ENCODE measurements at regions of chr19 and their contacts with region 1.

Region 1: DNA sequence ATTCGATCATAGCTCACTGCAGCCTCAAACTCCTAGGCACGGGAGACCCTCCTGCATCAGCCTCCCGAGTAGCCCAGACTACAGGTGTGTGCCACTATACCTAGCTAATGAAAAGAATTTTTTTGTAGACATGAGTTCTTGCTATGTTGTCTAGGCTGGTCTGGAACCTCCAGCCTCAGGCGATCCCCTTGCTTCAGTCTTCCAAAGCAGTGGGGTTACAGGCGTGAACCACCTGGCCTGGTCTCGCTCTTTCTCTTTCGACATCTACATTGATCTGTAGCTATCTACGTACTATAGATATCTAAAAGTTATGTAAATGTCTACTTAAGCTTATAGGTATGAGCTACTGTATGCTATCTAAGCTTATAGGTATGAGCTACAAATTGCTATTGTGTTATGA is 32.4 kb downstream of the NUMBL start:
- DNase-seq: no peak
- ATAC-seq: no peak
- H3K4me3 ChIP-seq: no peak overlapping the region
- H3K4me3 Mint-ChIP-seq: no peak overlapping the region
- H3K27ac ChIP-seq: no peak overlapping the region
- H3K27ac Mint-ChIP-seq: no peak overlapping the region
- H3K4me1 ChIP-seq: peaks cover 5 to 6% of the 10 kb centered on the region in 2 donors
- H3K4me1 Mint-ChIP-seq: peaks cover 10% of the 10 kb centered on the region
- H3K27me3 ChIP-seq: peaks cover 0 to 3% (median 0%) of the 10 kb centered on the region in 4 experiments
- H3K27me3 Mint-ChIP-seq: no peaks in the 10 kb centered on the region
- CTCF ChIP-seq: no peak

Region 2: GRCh38 chr19:40553885-40554857 is 103.9 kb before region 1 on chr19:
- CTCF ChIA-PET with region 1: no interaction called
- POLR2A ChIA-PET with region 1: no interaction called
- intact Hi-C with region 1: no loop called
- DNase-seq: no peak
- ATAC-seq: no peak
- H3K4me3 ChIP-seq: no peak overlapping the region
- H3K4me3 Mint-ChIP-seq: no peak overlapping the region
- H3K27ac ChIP-seq: no peak overlapping the region
- H3K27ac Mint-ChIP-seq: no peak overlapping the region
- H3K4me1 ChIP-seq: no peaks in the 10 kb centered on the region
- H3K4me1 Mint-ChIP-seq: peaks cover 4% of the 10 kb centered on the region
- H3K27me3 ChIP-seq: peaks cover 0 to 57% (median 17%) of the 10 kb centered on the region in 4 experiments
- H3K27me3 Mint-ChIP-seq: peaks cover 46% of the 10 kb centered on the region
- CTCF ChIP-seq: no peak

Region 3: GRCh38 chr19:40709817-40710216 is 51.8 kb after region 1 on chr19:
- CTCF ChIA-PET with region 1: no interaction called
- POLR2A ChIA-PET with region 1: no interaction called
- intact Hi-C with region 1: no loop called
- DNase-seq: no peak
- ATAC-seq: no peak
- H3K4me3 ChIP-seq: no peak overlapping the region
- H3K4me3 Mint-ChIP-seq: no peak overlapping the region
- H3K27ac ChIP-seq: no peak overlapping the region
- H3K27ac Mint-ChIP-seq: no peak overlapping the region
- H3K4me1 ChIP-seq: peaks cover 9 to 11% of the 10 kb centered on the region in 2 donors
- H3K4me1 Mint-ChIP-seq: peaks cover 11% of the 10 kb centered on the region
- H3K27me3 ChIP-seq: no peaks in the 10 kb centered on the region
- H3K27me3 Mint-ChIP-seq: no peaks in the 10 kb centered on the region
- CTCF ChIP-seq: no peak

Region 4: DNA sequence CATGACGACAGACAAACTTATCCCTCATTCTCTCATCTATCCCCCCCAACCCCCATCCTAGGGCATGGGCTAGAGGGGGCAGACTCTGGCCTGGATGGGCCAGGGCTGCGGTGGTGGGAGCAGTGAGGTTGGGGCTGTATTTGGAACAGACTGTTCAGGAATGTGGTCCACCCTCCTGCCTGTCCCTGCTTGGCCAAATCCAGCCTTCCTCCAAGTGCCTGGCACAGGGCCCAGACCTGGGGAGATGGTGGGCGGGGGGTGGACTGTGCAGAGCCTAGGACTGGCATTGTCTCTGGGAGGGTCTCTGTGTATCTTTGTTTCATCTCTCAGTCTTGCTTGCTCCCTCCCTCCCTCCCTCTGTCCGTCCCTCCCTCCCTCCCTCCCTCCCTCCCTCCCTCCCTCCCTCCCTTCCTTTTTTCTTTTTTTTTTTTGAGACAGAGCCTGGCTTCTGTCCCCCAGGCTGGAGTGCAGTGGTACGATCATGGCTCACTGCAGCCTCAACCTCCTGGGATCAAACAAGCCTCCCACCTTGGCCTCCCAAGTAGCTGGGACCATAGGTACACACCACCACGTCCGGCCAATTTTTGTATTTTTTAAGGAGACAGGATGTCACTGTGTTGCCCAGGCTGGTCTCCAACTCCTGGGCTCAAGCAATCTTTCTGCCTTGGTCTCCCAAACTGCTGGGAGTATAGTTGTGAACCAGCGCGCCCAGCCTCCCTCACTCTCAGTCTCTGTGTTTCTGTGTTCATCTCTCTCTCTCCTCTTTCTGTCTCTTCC is 155.3 kb after region 1 on chr19:
- CTCF ChIA-PET with region 1: interaction called, 117 read pairs
- POLR2A ChIA-PET with region 1: interaction called, 6 read pairs
- intact Hi-C with region 1: no loop called
- DNase-seq: no peak
- ATAC-seq: no peak
- H3K4me3 ChIP-seq: no peak overlapping the region
- H3K4me3 Mint-ChIP-seq: peak overlapping the region; percentile 97
- H3K27ac ChIP-seq: no peak overlapping the region
- H3K27ac Mint-ChIP-seq: no peak overlapping the region
- H3K4me1 ChIP-seq: peaks cover 13 to 35% of the 10 kb centered on the region in 2 donors
- H3K4me1 Mint-ChIP-seq: peaks cover 35% of the 10 kb centered on the region
- H3K27me3 ChIP-seq: no peaks in the 10 kb centered on the region
- H3K27me3 Mint-ChIP-seq: no peaks in the 10 kb centered on the region
- CTCF ChIP-seq: no peak

Region 5: DNA sequence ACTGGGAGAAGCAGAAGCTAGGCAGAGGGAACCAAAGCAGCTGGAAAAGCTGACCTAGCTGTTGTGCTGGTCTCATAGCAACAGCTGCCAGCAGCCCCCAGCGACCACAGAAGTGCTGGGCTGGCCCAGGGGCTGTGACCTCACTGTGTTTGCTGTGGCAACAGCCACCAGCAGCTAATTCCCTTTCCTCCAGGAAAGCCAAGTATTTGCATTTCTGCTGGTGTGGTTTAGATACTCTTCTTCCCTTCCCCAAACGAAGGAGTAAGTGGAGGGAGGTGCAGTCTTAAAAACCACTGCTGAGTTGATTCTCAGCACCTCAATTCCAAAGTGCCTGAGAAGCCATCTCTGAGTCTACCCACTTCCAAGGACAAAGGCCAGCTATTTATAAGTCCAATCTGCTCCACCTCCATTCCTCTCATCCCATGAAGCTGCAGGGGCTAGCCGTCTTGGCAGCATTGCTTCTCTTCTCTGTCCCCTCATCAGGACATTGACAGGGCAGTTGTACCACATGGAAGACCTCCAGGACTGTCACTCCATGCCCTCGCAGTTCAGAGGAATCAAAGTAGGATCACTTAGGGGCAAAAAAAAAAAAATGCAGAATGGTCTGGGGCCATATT is 640.4 kb after region 1 on chr19:
- CTCF ChIA-PET with region 1: no interaction called
- POLR2A ChIA-PET with region 1: no interaction called
- intact Hi-C with region 1: no loop called
- DNase-seq: peak; percentile 85
- ATAC-seq: peak; percentile 25
- H3K4me3 ChIP-seq: no peak overlapping the region
- H3K4me3 Mint-ChIP-seq: peak overlapping the region; percentile 86
- H3K27ac ChIP-seq: peak overlapping the region; percentile 83 to 100
- H3K27ac Mint-ChIP-seq: peak overlapping the region; percentile 98
- H3K4me1 ChIP-seq: peaks cover 58 to 65% of the 10 kb centered on the region in 2 donors
- H3K4me1 Mint-ChIP-seq: peaks cover 71% of the 10 kb centered on the region
- H3K27me3 ChIP-seq: no peaks in the 10 kb centered on the region
- H3K27me3 Mint-ChIP-seq: no peaks in the 10 kb centered on the region
- CTCF ChIP-seq: no peak

Measured in B cell (primary cell).